Calu3 (cell line): ENCODE measurements at regions of chr2 and their contacts with region 1.

Region 1: DNA sequence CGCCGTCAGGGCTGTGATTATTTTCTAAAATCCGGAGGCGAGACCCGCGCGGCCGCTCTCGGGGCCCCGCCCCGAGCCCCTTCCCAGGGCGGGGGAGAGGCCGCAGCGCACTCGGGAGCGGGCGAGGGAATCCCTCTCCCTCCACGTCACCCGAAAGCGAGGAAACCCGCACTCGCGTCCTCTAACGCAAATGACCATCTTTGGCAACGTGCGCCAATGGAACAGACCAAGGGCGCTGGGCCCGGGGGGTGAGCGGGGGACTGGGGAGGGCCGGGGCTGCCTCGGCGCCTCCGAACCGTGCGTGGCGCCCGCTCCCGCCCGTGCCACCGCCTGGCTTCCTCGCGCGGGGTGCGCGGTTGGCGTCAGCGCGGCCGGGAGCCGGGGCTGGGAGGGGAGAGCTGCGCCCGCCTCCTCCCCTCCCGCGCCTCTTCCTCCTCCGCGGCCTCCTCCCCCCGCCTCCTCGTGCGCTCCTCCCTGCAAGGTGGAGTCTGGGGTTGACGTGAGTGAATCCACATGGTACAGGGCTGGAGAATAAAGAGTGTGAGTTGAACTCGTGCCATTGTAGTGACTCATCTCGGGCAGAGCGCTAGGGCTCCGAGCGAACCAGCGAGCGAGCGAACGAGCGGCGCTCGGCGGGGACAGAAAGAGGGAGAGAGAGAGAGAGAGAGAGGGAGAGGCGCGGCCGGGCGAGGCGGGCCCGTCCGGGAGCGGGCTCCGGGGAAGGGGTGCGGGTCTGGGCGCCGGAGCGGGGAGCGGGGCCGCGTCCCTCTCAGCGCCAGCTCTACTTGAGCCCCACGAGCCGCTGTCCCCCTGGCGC is at the start of gene FOSL2:
- DNase-seq: peak; percentile 96
- H3K4me3 Mint-ChIP-seq: no peak within 1 kb of the TSS
- H3K27ac Mint-ChIP-seq: peak within 1 kb of the TSS; percentile 65
- H3K4me1 Mint-ChIP-seq: peaks cover 25% of the 10 kb centered on the region
- H3K27me3 Mint-ChIP-seq: no peaks in the 10 kb centered on the region
- CTCF ChIP-seq: no peak
- total RNA-seq, gene FOSL2: 53.7 and 57.3 TPM in 2 replicates

Region 2: GRCh38 chr2:27703638-27704341 is 688.7 kb before region 1 on chr2:
- CTCF ChIA-PET with region 1: no interaction called
- intact Hi-C with region 1: loop called (anchors 2 kb)
- DNase-seq: peak; percentile 90
- H3K4me3 Mint-ChIP-seq: no peak overlapping the region
- H3K27ac Mint-ChIP-seq: peak overlapping the region; percentile 37
- H3K4me1 Mint-ChIP-seq: peaks cover 31% of the 10 kb centered on the region
- H3K27me3 Mint-ChIP-seq: no peaks in the 10 kb centered on the region
- CTCF ChIP-seq: peak; percentile 84

Region 3: DNA sequence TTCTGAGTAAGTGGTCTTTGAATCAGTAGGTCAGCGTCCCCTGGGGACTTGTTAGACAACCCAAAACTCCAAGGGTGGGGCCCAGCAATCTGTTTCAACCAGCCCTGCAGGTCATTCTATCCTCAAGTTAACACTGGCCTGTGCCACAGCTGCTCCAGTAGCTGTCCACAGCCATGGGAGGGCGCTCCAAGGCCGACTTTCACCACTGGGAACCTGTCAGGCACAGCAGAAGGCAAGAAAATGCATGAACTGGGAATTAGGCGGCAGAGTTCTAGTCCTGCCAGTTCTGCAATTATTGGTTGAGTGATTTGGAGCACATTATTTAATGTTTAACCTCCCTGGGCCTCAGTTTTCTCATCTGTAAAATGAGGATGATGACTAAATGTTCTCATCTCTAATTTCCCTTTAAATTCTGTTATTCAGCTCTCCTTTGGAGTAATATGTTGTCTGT is 638.3 kb before region 1 on chr2:
- CTCF ChIA-PET with region 1: no interaction called
- intact Hi-C with region 1: loop called (anchors 1 kb)
- DNase-seq: peak; percentile 93
- H3K4me3 Mint-ChIP-seq: peak overlapping the region; percentile 72
- H3K27ac Mint-ChIP-seq: peak overlapping the region; percentile 95
- H3K4me1 Mint-ChIP-seq: peaks cover 49% of the 10 kb centered on the region
- H3K27me3 Mint-ChIP-seq: no peaks in the 10 kb centered on the region
- CTCF ChIP-seq: peak; percentile 91

Region 4: GRCh38 chr2:27888790-27889189 is 503.7 kb before region 1 on chr2:
- CTCF ChIA-PET with region 1: no interaction called
- intact Hi-C with region 1: loop called (anchors 2 kb)
- DNase-seq: no peak
- H3K4me3 Mint-ChIP-seq: peak overlapping the region; percentile 98
- H3K27ac Mint-ChIP-seq: peak overlapping the region; percentile 97
- H3K4me1 Mint-ChIP-seq: peaks cover 31% of the 10 kb centered on the region
- H3K27me3 Mint-ChIP-seq: no peaks in the 10 kb centered on the region
- CTCF ChIP-seq: no peak

Region 5: GRCh38 chr2:27954771-27955383 is 437.6 kb before region 1 on chr2:
- CTCF ChIA-PET with region 1: no interaction called
- intact Hi-C with region 1: loop called (anchors 10 kb)
- DNase-seq: peak; percentile 58
- H3K4me3 Mint-ChIP-seq: peak overlapping the region; percentile 37
- H3K27ac Mint-ChIP-seq: peak overlapping the region; percentile 89
- H3K4me1 Mint-ChIP-seq: peaks cover 76% of the 10 kb centered on the region
- H3K27me3 Mint-ChIP-seq: no peaks in the 10 kb centered on the region
- CTCF ChIP-seq: no peak

Region 6: GRCh38 chr2:28233164-28233676 is 159.3 kb before region 1 on chr2:
- CTCF ChIA-PET with region 1: no interaction called
- intact Hi-C with region 1: loop called (anchors 5 kb)
- DNase-seq: peak; percentile 43
- H3K4me3 Mint-ChIP-seq: peak overlapping the region; percentile 61
- H3K27ac Mint-ChIP-seq: peak overlapping the region; percentile 90
- H3K4me1 Mint-ChIP-seq: peaks cover 30% of the 10 kb centered on the region
- H3K27me3 Mint-ChIP-seq: no peaks in the 10 kb centered on the region
- CTCF ChIP-seq: no peak

Region 7: DNA sequence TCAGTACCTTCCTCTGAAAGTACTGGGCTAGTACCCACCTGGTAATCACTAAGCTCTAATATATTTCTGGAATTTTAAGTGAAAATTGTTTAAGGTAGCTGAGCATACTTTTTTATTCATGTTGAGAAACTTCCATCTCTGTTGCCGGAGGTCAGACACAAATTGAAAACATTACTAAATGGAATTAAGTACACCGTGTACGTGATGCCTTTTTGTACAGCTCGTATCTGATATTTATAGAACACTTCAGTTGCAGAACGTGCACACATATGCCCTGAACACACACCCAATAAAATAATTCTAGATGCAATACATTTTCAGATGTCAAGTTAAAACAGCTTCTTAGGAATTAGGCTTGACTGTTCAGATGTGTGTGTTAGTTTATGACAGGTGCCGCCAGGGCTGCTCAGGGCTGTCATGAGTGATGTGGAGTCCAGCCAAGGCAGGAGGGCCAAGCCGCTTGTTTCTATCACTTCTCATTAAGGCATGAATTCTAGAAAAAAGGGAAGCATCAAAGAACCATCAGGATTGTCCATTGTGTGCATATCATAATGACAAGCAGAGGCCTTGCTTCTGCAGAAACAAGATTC is 80.8 kb before region 1 on chr2:
- CTCF ChIA-PET with region 1: no interaction called
- intact Hi-C with region 1: no loop called
- DNase-seq: no peak
- H3K4me3 Mint-ChIP-seq: no peak overlapping the region
- H3K27ac Mint-ChIP-seq: no peak overlapping the region
- H3K4me1 Mint-ChIP-seq: no peaks in the 10 kb centered on the region
- H3K27me3 Mint-ChIP-seq: no peaks in the 10 kb centered on the region
- CTCF ChIP-seq: no peak

Region 8: GRCh38 chr2:28338046-28338817 is 54.3 kb before region 1 on chr2:
- CTCF ChIA-PET with region 1: no interaction called
- intact Hi-C with region 1: no loop called
- DNase-seq: no peak
- H3K4me3 Mint-ChIP-seq: no peak overlapping the region
- H3K27ac Mint-ChIP-seq: no peak overlapping the region
- H3K4me1 Mint-ChIP-seq: peaks cover 15% of the 10 kb centered on the region
- H3K27me3 Mint-ChIP-seq: no peaks in the 10 kb centered on the region
- CTCF ChIP-seq: no peak

Region 9: DNA sequence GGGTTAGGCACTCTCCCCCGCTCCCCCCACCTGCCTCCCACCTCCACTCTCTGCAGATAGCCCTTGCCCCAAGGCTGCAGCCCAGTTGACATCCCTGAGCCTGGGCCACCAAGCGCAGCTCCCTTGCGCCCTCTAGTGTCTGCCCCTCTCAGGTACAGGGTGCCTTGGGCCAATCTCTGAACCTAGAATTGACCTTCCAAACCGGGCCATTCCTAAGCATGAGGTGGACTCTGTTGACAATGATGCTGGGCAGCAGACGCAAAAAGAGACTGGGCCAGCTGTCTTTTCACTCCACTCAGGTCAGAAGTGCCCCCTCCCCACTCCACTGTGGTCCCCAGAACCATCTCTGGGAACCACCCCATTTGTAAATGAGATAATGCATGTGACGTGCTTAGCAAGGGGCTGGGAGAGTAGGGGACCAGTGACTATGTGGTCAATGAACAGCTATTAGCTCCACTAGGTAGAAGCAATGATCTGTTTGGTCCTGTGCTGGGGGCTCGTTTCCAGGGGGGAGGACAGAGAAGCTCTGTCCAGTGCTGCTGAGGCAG is 60.1 kb after region 1 on chr2:
- CTCF ChIA-PET with region 1: interaction called, 11 read pairs
- intact Hi-C with region 1: no loop called
- DNase-seq: peak; percentile 85
- H3K4me3 Mint-ChIP-seq: no peak overlapping the region
- H3K27ac Mint-ChIP-seq: no peak overlapping the region
- H3K4me1 Mint-ChIP-seq: peaks cover 24% of the 10 kb centered on the region
- H3K27me3 Mint-ChIP-seq: no peaks in the 10 kb centered on the region
- CTCF ChIP-seq: peak; percentile 86